ENCODE measurements at regions of chr4 and their contacts with region 1.

Region 1: GRCh38 chr4:139665690-139666529 is at the start of gene MGST2:
- DNase-seq: peak; percentile 91
- total RNA-seq, gene MGST2: 90.7 TPM

Region 2: DNA sequence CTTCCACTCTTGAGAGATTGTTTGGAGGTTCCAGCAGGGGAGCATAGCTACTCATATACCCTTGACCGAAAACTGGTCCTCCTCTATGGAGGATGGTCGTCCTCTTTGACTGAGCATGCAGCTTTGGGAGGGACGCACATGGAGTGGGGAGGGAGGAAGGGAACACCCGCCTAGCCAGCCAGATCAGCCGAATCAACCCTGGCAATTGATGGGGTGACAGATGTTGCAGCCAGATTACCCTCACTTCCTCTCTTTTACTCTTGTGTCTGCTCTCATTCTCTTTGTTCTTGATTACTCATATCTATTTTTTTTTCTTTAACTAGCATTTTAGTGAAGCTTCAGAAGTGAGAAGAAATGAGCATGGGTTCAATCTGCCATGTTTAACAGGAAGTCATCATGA is 19.3 kb after region 1 on chr4:
- intact Hi-C with region 1: loop called (anchors 2 kb)
- DNase-seq: no peak

Region 3: DNA sequence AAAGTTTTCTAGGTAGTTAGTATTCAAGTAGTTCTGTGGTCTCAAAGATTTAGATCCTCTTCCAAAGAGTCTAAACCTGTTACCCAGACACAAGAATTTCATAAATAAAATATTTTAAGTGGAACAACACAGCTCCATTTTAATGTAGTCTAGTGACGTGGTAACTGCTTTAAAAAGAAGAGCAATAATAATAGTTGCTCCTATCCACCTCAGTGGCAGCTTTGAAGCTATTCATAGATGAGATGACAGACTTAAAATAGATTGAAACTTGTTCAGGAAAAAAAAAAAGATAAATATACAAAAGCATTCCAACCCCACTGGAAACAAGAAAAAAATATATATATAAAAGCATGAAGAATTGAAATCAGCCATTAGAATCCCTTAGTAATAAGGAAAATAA is 722.1 kb after region 1 on chr4:
- intact Hi-C with region 1: no loop called
- DNase-seq: no peak